OCI-LY7 (cell line): ENCODE measurements at regions of chr10 and their contacts with region 1.

Region 1: DNA sequence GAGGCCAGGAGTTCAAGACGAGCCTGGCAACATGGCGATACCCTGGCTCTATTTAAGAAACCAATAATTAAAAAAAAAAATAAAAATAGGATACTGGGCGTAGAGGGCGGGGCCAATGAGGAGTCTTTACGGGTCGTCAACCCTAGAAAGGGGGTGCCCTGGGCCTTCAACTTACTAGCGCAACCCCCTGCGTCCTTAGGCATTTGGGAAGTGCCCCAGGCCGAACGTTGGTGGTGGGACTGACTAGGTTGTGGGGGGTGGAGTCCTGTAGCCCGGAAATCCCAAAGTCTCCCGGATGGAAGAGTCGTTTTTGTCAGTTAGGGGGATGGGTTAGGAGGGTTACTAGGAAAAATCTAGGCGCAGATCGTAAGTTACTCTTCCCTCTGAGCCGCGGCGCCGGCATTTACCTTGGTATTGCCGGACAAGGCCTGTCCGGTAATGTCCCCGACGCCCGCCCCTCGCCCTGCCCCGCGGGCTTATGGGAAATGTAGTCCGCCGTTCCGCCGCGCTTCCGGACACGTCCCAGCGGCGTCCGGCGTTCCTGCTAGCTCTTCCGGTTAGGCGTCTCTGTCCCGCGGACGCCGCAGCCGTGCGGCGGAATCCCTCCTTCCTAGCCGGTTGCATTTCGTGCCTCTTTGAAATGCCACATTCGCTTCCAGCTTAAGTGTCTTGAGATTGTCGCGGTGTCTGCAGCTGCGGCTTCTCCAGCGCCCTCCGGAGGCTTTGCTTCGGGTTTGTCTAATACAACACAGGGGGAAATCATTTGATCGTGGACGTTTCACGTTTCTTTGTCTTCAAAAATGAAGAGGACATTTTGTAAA is 1.3 kb upstream of the ACBD5 start:
- DNase-seq: peak; percentile 96
- H3K4me3 ChIP-seq: peak overlapping the region; percentile 93
- H3K27ac ChIP-seq: peak overlapping the region; percentile 96
- H3K4me1 ChIP-seq: peaks cover 31% of the 10 kb centered on the region
- CTCF ChIP-seq: peak; percentile 77

Region 2: DNA sequence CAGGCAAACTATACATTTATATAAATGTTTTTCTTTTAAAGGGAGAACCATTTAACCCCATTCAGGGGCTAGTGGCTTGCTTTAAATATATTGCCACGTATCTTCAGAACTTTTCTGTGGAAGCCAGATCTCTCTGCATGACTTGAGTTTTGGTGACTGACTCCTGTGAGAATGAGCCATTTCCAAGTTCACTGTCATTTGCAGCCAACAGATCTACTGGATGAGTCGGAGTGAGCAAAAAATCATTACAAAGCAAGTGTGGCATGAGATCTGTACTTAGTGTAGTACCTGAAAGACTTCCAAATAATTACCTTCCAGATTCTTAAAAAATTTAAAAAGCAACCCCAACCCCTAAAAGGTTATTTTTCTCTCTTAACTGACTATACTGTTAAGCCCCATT is 498.8 kb before region 1 on chr10:
- CTCF ChIA-PET with region 1: no interaction called
- POLR2A ChIA-PET with region 1: no interaction called
- intact Hi-C with region 1: no loop called
- DNase-seq: no peak
- H3K4me3 ChIP-seq: no peak overlapping the region
- H3K27ac ChIP-seq: no peak overlapping the region
- H3K4me1 ChIP-seq: peaks cover 17% of the 10 kb centered on the region
- CTCF ChIP-seq: no peak

Region 3: DNA sequence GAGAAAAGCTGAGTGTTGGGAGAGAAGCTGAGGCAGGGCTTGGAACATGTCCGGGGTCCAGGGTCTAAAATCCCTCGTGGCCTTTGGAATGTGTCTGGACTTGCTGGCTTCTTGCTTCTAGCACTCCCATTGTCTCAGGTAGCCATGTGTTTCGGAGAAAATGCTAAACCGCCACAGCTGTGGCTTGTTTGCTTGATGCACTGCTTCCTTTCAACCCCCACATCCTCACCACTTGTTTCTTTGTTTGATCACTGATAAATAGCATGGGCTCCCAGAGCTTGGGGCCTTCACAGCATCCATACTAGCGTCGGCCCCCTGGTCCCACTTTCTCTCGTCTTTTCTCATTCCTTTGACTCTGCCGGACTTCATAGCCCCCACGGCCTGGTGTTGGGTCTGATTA is 244.3 kb before region 1 on chr10:
- CTCF ChIA-PET with region 1: no interaction called
- POLR2A ChIA-PET with region 1: no interaction called
- intact Hi-C with region 1: no loop called
- DNase-seq: no peak
- H3K4me3 ChIP-seq: no peak overlapping the region
- H3K27ac ChIP-seq: no peak overlapping the region
- H3K4me1 ChIP-seq: no peaks in the 10 kb centered on the region
- CTCF ChIP-seq: no peak

Region 4: DNA sequence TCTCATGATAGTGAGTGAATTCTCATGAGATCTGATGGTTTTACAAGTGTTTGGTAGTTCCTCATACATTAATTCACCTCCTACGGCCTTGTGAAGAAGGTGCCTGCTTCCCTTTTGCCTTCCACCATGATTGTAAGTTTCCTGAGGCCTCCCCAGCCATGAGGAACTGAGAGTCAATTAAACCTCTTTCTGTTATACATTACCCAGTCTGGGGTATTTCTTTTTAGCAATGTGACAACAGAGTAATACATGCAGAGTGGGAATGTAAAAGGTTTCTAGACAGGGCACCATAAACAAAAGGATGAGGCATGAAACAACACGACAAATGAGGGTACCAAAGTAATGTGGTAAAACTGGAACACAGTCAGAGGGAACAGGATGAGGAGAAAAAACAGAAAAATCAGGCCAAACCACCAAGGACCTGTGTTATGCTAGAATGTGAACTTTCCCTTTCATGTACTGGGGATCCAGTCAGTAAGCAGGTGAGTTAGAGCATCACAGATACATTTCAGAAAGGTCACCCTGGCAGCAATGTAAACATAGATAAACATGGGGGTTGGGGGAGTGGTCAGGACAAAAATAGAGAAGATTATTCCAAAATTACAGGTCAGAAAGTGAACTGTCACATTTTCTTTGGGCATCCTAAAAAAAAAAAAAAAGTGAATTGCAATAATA is 173.5 kb before region 1 on chr10:
- CTCF ChIA-PET with region 1: no interaction called
- POLR2A ChIA-PET with region 1: no interaction called
- intact Hi-C with region 1: no loop called
- DNase-seq: no peak
- H3K4me3 ChIP-seq: no peak overlapping the region
- H3K27ac ChIP-seq: no peak overlapping the region
- H3K4me1 ChIP-seq: no peaks in the 10 kb centered on the region
- CTCF ChIP-seq: no peak

Region 5: DNA sequence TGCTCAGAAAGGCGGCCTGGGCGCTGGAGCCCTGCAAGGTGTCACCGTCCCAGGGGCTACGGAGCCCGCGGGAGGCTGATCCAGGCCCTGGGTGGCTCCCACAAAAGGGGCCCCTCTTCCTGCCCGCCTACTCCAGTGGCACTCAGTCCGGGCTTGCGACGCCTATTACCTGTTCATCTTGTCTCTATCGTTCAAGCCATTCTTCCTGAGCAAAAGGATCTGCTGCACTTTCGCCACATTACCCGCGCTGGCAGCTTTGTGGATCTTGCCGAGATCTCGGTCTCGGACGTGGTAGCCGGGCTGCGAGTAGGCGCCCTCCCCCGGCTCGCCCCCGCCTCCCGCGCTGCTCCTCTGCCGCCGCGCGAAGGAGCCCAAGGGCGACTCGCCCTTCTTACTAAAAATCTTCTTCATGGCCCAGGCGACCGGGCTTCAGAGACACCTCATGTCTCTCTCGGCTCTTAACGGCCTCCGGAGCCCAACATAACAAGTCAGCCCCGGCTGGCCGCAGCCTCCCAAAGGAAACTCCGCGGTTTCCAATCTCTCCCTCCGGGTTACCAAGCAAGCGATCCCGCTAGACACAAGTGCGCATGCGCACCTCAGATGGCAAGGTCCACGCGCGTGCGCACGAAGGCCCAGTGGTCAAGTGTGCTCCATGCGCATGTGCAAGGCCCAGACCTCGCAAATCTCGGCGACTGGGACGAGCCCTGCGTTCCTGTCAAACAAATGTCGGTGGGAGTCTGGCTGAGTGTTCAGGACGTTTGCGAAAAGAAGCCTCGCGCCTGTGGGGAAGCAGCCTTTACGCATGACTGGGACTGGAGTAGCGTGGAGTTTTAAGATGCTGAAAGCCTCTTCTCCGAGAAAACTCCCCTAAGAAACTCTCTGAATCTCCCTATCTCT is 141.7 kb before region 1 on chr10 and contains the start of gene ANKRD26:
- CTCF ChIA-PET with region 1: no interaction called
- POLR2A ChIA-PET with region 1: no interaction called
- intact Hi-C with region 1: loop called (anchors 2 kb)
- DNase-seq: peak; percentile 99
- H3K4me3 ChIP-seq: peak within 1 kb of the TSS; percentile 70
- H3K27ac ChIP-seq: peak within 1 kb of the TSS; percentile 52
- H3K4me1 ChIP-seq: peaks cover 16% of the 10 kb centered on the region
- CTCF ChIP-seq: peak; percentile 35; the same call in 1 of the 2 replicates
- total RNA-seq, gene ANKRD26: 8.6 and 9.1 TPM in 2 replicates

Region 6: DNA sequence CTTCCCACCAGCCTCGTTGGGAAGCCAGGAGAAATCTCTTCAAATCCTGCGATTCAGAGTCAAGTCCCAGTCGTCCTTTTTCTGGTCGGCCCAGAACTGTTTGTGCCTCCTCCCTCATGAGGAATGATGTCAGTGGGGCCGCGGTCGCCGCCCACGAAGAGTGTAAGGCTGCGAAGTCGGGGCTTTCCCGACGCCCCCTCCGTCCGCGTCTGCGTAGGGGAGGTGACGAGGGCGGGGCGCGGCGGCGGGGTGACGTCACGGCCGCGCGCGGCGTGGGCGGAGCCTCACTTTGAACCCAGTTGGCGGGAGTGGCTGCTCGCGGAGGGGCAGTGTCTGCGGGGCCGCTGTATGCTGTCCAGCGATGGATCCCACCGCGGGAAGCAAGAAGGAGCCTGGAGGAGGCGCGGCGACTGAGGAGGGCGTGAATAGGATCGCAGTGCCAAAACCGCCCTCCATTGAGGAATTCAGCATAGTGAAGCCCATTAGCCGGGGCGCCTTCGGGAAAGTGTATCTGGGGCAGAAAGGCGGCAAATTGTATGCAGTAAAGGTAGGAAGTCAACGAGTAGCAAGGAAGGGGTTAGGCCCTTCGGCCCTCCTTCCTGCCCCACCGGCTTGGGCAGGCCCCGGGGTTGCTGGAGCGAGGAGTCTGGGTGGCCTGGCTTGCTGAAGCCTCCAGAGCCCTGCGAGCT is 86.7 kb before region 1 on chr10 and contains the start of gene MASTL:
- CTCF ChIA-PET with region 1: no interaction called
- POLR2A ChIA-PET with region 1: interaction called, 7 read pairs
- intact Hi-C with region 1: loop called (anchors 1 kb)
- DNase-seq: peak; percentile 94
- H3K4me3 ChIP-seq: peak within 1 kb of the TSS; percentile 96
- H3K27ac ChIP-seq: peak within 1 kb of the TSS; percentile 96
- H3K4me1 ChIP-seq: peaks cover 34% of the 10 kb centered on the region
- CTCF ChIP-seq: no peak
- total RNA-seq, gene MASTL: 42.2 and 44.0 TPM in 2 replicates

Region 7: DNA sequence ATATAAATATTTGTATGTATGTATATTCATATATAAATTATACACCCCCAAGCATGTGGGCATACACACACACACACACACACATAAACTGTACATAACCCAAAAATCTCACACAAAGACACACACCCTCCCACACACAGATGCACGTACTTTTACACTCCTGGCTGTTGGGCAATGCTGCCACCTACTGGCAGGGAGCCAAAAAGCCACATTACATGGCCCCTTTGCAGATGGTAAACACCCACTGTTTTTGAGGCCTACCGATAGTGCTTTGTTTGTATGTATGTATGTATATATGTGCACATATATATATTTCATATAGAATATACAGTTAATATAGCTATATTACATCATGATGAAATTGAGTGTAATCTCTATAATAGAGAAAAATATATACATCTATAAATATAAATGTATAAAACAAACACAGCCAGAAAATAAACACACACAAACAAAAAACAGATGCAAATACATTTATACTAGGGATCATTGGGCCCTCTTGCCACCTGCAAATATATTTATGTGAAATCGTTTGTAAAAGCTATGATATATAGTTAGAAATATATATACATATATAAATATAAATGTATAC is 118.8 kb after region 1 on chr10:
- CTCF ChIA-PET with region 1: no interaction called
- POLR2A ChIA-PET with region 1: no interaction called
- intact Hi-C with region 1: loop called (anchors 5 kb)
- DNase-seq: peak; percentile 80
- H3K4me3 ChIP-seq: no peak overlapping the region
- H3K27ac ChIP-seq: no peak overlapping the region
- H3K4me1 ChIP-seq: no peaks in the 10 kb centered on the region
- CTCF ChIP-seq: peak; percentile 92

Region 8: GRCh38 chr10:27504007-27504807 is 262.3 kb after region 1 on chr10 and contains the start of gene RAB18:
- CTCF ChIA-PET with region 1: interaction called, 3 read pairs
- POLR2A ChIA-PET with region 1: interaction called, 4 read pairs
- intact Hi-C with region 1: loop called (anchors 1 kb)
- DNase-seq: peak; percentile 99
- H3K4me3 ChIP-seq: peak within 1 kb of the TSS; percentile 97
- H3K27ac ChIP-seq: peak within 1 kb of the TSS; percentile 54
- H3K4me1 ChIP-seq: peaks cover 14% of the 10 kb centered on the region
- CTCF ChIP-seq: peak; percentile 38; the same call in 1 of the 2 replicates
- total RNA-seq, gene RAB18: 8.1 and 12.2 TPM in 2 replicates